HCT116 (cell line): ENCODE measurements at regions of chr18 and their contacts with region 1.

Region 1: DNA sequence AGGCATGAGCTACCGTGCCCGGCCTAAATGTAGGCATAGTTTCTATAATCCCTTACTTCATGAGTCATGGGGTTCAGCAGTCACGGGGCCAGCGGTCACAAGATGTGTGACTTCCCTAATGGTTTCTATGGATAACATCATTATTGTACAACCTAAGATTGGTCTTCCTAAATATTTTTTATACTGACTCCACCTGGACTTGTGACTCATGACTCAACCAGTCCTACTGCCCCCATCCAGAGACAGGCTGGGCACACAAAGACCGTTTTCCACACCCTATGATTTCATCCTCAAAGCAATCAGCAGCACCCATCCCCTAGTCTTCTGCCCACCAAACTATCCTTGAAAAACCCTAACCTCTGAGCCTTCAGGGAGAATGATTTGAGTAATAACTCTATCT is 15.9 kb downstream of the FAM210A start:
- DNase-seq: peak; percentile 87
- ATAC-seq: peak; percentile 94
- H3K4me3 ChIP-seq: peak overlapping the region in 1 of 2 experiments; percentile 25; a peak in 3 of 4 replicates
- H3K27ac ChIP-seq: peak overlapping the region; percentile 81
- H3K4me1 ChIP-seq: peaks cover 16 to 51% of the 10 kb centered on the region in 2 experiments
- H3K27me3 ChIP-seq: no peaks in the 10 kb centered on the region
- CTCF ChIP-seq: no peak
- POLR2A ChIP-seq: no peak
- RAD21 ChIP-seq: no peak

Region 2: GRCh38 chr18:13726232-13726971 is 15.9 kb after region 1 on chr18 and contains the starts of genes FAM210A and RNMT:
- CTCF ChIA-PET with region 1: no interaction called
- POLR2A ChIA-PET with region 1: interaction called, 4 read pairs
- RAD21 ChIA-PET with region 1: no interaction called
- intact Hi-C with region 1: loop called (anchors 1 kb)
- DNase-seq: peak; percentile 90
- ATAC-seq: peak; percentile 95
- H3K4me3 ChIP-seq: peak within 1 kb of the TSS; percentile 89 to 93
- H3K27ac ChIP-seq: peak within 1 kb of the TSS; percentile 83
- H3K4me1 ChIP-seq: peaks cover 4 to 22% of the 10 kb centered on the region in 2 experiments; a peak in 2 of 4 replicates
- H3K27me3 ChIP-seq: no peaks in the 10 kb centered on the region
- CTCF ChIP-seq: no peak
- POLR2A ChIP-seq: peak; percentile 43
- RAD21 ChIP-seq: no peak; the same call in 1 of the 2 replicates
- total RNA-seq, gene FAM210A: 26.2 TPM
- total RNA-seq, gene RNMT: 58.0 TPM